K562 (cell line): ENCODE measurements at regions of chr19 and their contacts with region 1.

Region 1: GRCh38 chr19:54325194-54325621 is 12.2 kb upstream of the LILRA5 start:
- DNase-seq: peak; percentile 55 to 71 (median 64)
- ATAC-seq: peak; percentile 85
- H3K4me3 ChIP-seq: no peak overlapping the region
- H3K27ac ChIP-seq: no peak overlapping the region
- H3K4me1 ChIP-seq: no peaks in the 10 kb centered on the region
- H3K27me3 ChIP-seq: peaks cover 7 to 11% of the 10 kb centered on the region in 2 experiments; a peak in 4 of 5 replicates
- CTCF ChIP-seq: peak; percentile 80 to 84 (median 83)
- EP300 ChIP-seq: no peak
- POLR2A ChIP-seq: no peak
- RAD21 ChIP-seq: peak; percentile 58 to 66

Region 2: GRCh38 chr19:54355675-54356074 is 30.5 kb after region 1 on chr19:
- CTCF ChIA-PET with region 1: no interaction called
- POLR2A ChIA-PET with region 1: no interaction called
- in situ Hi-C with region 1: no loop called
- intact Hi-C with region 1: loop called (anchors 2 kb)
- DNase-seq: no peak
- ATAC-seq: no peak
- H3K4me3 ChIP-seq: no peak overlapping the region
- H3K27ac ChIP-seq: no peak overlapping the region
- H3K4me1 ChIP-seq: peaks cover 0 to 3% of the 10 kb centered on the region in 2 experiments; a peak in 2 of 5 replicates
- H3K27me3 ChIP-seq: peaks cover 8 to 44% of the 10 kb centered on the region in 2 experiments; a peak in 4 of 5 replicates
- CTCF ChIP-seq: no peak
- EP300 ChIP-seq: no peak
- POLR2A ChIP-seq: no peak
- RAD21 ChIP-seq: no peak

Region 3: DNA sequence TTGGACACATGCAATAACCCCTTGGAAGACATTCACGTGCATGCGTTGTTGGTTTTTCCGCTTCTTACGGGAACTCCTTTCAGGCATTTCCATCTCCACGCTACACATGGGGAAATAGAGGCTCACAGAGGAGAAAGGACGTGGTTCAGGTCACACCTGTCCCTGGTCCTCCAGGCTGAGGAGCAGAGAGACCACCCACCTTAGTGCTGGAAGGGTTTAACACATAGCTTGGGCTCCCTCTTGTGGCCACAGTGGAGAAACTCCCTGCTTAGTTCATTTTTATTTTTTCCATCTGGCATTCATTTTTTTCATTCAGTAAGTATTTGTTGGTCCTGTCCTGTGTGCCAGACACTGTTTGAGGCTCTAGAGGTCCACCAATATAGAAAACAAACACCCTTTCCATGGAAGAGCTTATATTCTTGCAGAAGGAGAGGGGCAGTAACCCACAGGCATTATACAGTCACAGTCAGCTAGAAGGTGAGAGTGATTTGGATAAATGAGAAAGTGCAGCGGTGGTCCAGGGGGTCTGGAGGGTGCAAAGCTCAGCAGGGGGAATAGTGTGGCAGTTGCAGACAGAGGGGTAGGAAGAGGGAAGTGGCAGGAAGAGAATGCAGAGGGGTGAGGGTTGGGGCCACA is 65.9 kb after region 1 on chr19:
- CTCF ChIA-PET with region 1: interaction called, 7 read pairs
- POLR2A ChIA-PET with region 1: no interaction called
- in situ Hi-C with region 1: no loop called
- intact Hi-C with region 1: loop called (anchors 2 kb)
- DNase-seq: peak; percentile 41 to 71 (median 50)
- ATAC-seq: peak; percentile 61; the same call in 2 of the 3 replicates
- H3K4me3 ChIP-seq: no peak overlapping the region
- H3K27ac ChIP-seq: no peak overlapping the region
- H3K4me1 ChIP-seq: no peaks in the 10 kb centered on the region
- H3K27me3 ChIP-seq: peaks cover 23 to 31% of the 10 kb centered on the region in 2 experiments
- CTCF ChIP-seq: peak; percentile 65 to 86 (median 82); a peak in 5 of 6 replicates
- EP300 ChIP-seq: no peak
- POLR2A ChIP-seq: no peak
- RAD21 ChIP-seq: peak; percentile 78 to 82